A673 (cell line): ENCODE measurements at regions of chr18 and their contacts with region 1.

Region 1: DNA sequence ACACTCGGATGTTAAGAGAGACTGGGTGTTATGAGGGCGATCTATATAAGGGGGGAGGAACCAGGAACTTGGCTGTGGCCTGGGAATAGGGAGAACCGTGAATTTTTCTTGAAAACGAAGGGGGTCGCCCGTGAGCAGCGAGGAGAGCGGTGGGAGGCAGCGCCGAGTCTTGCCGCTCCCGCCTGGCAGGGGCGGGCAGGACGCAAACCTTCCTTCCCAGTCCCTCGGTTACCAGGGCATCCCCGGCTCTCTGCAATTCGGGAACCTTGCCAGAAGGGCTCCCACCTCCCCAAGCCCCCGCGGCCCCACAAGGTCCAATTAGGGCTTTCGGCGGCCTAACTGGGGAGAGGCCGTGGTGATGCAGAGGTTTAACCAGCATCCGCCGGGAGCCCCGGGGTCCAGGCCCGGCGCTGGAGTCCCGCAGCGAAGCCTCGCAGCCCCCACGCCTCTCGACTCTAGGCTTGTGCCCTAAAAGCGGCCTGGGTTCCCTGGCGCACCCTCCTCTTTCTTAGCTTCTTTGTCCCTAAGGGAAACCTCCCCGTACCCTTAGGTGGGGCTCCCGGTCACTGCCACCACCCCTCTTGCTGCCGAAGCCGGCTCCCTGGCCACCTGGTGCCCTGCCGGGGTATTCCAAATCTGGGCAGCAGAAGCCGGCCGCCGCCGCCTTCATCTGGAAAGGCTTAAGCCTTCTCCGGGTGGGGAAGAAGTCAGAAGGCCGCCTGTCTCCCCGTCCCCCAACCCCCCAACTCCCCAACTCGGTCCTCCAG is 680 bp upstream of the FHOD3 start:
- DNase-seq: peak; percentile 64
- H3K4me3 ChIP-seq: peak overlapping the region; percentile 35
- H3K27ac ChIP-seq: no peak overlapping the region
- H3K4me1 ChIP-seq: peaks cover 5% of the 10 kb centered on the region
- H3K27me3 ChIP-seq: peaks cover 82% of the 10 kb centered on the region
- CTCF ChIP-seq: peak; percentile 65

Region 2: DNA sequence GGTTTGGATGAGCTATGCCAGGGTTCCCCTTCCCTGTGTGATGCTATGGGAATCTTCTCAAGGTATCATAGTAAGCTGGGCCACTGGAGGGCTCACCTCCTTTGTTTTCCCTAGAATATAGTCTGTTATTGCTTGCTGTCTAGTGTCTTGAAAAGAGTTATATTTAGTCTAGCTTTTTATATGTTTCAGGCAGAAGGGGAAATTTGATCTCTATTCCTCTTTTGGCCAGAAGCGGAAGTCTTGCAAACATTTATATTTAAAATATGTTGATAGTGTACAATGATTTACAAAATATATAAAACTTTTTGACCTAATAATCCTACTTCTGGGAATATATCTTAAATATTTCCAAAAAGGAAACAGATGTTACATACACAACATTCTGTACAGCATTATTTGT is 261.4 kb after region 1 on chr18:
- CTCF ChIA-PET with region 1: no interaction called
- POLR2A ChIA-PET with region 1: no interaction called
- intact Hi-C with region 1: loop called (anchors 5 kb)
- DNase-seq: no peak
- H3K4me3 ChIP-seq: no peak overlapping the region
- H3K27ac ChIP-seq: no peak overlapping the region
- H3K4me1 ChIP-seq: no peaks in the 10 kb centered on the region
- H3K27me3 ChIP-seq: peaks cover 4% of the 10 kb centered on the region
- CTCF ChIP-seq: no peak

Region 3: GRCh38 chr18:36572135-36572856 is 275.5 kb after region 1 on chr18:
- CTCF ChIA-PET with region 1: no interaction called
- POLR2A ChIA-PET with region 1: no interaction called
- intact Hi-C with region 1: loop called (anchors 1 kb)
- DNase-seq: peak; percentile 57
- H3K4me3 ChIP-seq: no peak overlapping the region
- H3K27ac ChIP-seq: no peak overlapping the region
- H3K4me1 ChIP-seq: no peaks in the 10 kb centered on the region
- H3K27me3 ChIP-seq: peaks cover 18% of the 10 kb centered on the region
- CTCF ChIP-seq: peak; percentile 80